Adrenal gland (tissue), 19 donors: ENCODE measurements at regions of chr17 and their contacts with region 1.

Region 1: DNA sequence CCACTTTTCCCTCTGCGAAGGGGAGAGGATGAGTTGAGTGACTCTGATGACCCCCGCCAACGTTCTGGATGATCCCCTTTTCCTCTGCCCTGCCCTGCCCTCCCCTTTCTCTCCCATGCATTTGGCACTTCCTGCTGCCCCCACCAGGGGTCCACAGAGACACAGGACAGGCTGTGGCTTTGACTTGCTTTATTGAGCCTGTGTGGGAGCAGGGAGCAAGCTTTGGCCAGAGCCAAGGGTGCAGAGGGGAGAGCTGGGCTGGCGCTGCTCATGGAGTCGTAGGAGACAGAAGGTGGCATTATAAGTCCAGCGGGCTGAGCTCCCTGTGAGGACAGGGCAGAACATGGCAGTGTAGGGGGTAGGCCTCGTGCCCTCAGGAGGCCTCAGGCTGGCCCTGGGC is 1.6 kb downstream of the PPY start:
- DNase-seq: no peak
- H3K4me3 ChIP-seq: no peak overlapping the region
- H3K27ac ChIP-seq: no peak overlapping the region
- H3K4me1 ChIP-seq: no peaks in the 10 kb centered on the region
- H3K27me3 ChIP-seq: peaks cover 7% of the 10 kb centered on the region
- CTCF ChIP-seq: peak in 4 of 6 experiments; percentile 7 to 25 (median 15)
- POLR2A ChIP-seq: no peak

Region 2: GRCh38 chr17:43994272-43995149 is 53.9 kb after region 1 on chr17:
- intact Hi-C with region 1: loop called (anchors 2 to 5 kb)
- DNase-seq: peak; percentile 53 to 79 (median 72)
- H3K4me3 ChIP-seq: peak overlapping the region in 1 of 4 donors; percentile 44
- H3K27ac ChIP-seq: no peak overlapping the region
- H3K4me1 ChIP-seq: peaks cover 0 to 6% of the 10 kb centered on the region in 2 donors
- H3K27me3 ChIP-seq: no peaks in the 10 kb centered on the region
- CTCF ChIP-seq: peak; percentile 79 to 94 (median 90)
- POLR2A ChIP-seq: no peak

Region 3: DNA sequence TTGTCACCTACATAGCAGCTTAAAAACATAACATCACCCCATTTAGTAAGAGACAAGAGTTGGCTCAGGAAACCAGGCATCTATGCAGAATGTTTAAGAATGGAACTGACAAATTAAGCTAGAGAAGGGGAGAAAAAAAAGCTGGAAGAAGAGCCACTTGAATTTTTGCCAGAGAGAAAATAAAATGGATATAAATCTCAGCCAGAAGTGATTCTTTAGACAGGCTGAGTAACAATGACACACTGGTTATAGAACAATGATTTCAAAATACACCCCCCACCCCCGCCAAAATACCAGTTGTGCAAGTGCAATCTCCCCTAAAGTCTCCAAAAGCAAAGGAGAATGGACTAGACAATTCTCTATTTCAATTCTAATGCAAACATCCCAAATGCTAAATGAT is 103.4 kb after region 1 on chr17:
- intact Hi-C with region 1: loop called in 1 of 2 experiments (anchors 5 kb)
- DNase-seq: peak in 3 of 7 donors; percentile 27 to 41 (median 39)
- H3K4me3 ChIP-seq: no peak overlapping the region
- H3K27ac ChIP-seq: peak overlapping the region in 1 of 5 donors; percentile 5
- H3K4me1 ChIP-seq: peaks cover 8 to 30% of the 10 kb centered on the region in 2 donors
- H3K27me3 ChIP-seq: no peaks in the 10 kb centered on the region
- CTCF ChIP-seq: no peak
- POLR2A ChIP-seq: no peak

Region 4: DNA sequence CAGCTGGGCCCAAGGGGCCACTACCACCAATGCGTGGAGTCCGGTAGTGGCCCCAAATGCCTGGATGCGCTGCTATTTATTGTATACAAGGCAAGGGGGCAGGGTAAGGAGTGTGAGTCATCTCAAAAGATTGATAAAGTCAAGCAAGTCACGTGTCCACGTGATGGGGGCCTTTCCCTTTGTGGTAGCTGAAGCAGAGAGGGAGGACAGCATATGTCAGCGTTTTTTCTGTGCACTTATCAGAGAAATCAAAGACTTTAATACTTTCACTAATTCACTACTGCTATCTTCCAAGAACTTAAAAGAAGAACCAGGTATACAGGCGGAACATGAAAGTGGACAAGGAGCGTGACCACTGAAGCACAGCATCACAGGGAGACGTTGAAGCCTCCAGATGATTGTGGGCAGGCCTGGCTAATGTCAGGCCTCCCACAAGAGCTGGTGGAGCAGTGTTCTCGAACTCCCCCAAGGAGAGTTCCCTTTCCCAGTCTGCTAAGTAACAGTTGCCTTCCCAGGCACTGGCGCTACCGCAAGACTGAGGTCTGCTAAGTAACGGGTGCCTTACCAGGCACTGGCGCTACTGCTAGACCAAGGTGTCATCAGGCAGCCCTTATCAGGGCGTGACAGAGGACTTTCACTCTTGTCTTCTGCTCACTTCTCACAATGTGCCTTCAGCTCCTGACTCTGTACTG is 219.0 kb after region 1 on chr17:
- intact Hi-C with region 1: loop called in 1 of 2 experiments (anchors 10 kb)
- DNase-seq: no peak
- H3K4me3 ChIP-seq: no peak overlapping the region
- H3K27ac ChIP-seq: no peak overlapping the region
- H3K4me1 ChIP-seq: no peaks in the 10 kb centered on the region
- H3K27me3 ChIP-seq: no peaks in the 10 kb centered on the region
- CTCF ChIP-seq: no peak
- POLR2A ChIP-seq: no peak